OCI-LY7 (cell line): ENCODE measurements at regions of chr20 and their contacts with region 1.

Region 1: GRCh38 chr20:50746138-50746940 is 15.0 kb downstream of the PARD6B start:
- DNase-seq: no peak
- H3K4me3 ChIP-seq: no peak overlapping the region
- H3K27ac ChIP-seq: no peak overlapping the region
- H3K4me1 ChIP-seq: no peaks in the 10 kb centered on the region
- CTCF ChIP-seq: no peak

Region 2: GRCh38 chr20:50625986-50626677 is 120.2 kb before region 1 on chr20:
- CTCF ChIA-PET with region 1: interaction called, 6 read pairs
- POLR2A ChIA-PET with region 1: no interaction called
- intact Hi-C with region 1: loop called (anchors 5 kb)
- DNase-seq: peak; percentile 61
- H3K4me3 ChIP-seq: no peak overlapping the region
- H3K27ac ChIP-seq: no peak overlapping the region
- H3K4me1 ChIP-seq: peaks cover 36% of the 10 kb centered on the region
- CTCF ChIP-seq: peak; percentile 76

Region 3: DNA sequence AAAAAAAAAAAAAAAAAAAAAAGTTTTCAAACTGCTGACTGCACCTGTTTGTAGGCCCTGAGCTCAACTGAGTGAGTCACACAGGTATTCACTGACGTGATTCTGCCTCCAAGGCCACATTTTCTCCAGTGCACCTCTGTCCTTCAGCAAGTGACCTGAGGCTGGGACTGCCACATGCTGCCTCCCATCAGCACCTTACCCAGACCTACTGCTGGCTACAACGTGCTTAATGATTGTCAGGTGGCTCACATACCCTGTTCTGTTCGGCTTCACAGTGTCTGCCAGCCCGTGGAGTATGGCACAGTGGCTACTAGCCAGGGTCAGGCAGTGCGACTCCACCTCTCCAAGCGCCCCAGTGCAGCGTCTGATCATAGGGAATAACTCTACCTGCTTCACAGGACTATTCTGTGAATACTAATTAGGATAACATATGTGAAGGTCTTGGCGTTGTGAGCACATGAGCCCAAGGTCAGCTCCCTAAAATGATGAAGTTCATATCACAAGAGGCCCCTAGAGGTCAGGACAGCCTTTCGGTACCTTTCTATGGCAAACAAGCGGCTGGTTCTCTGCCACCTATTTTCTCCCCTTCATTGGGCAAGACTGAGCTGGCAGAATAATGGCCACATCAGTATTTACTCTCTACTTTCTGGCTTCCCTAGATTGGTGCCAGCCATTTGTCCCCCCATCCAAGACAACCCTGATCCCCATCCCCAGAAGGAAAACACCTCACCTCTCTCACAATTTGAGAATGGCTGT is 83.1 kb before region 1 on chr20:
- CTCF ChIA-PET with region 1: no interaction called
- POLR2A ChIA-PET with region 1: interaction called, 4 read pairs
- intact Hi-C with region 1: loop called (anchors 2 kb)
- DNase-seq: peak; percentile 52
- H3K4me3 ChIP-seq: no peak overlapping the region
- H3K27ac ChIP-seq: no peak overlapping the region
- H3K4me1 ChIP-seq: peaks cover 16% of the 10 kb centered on the region
- CTCF ChIP-seq: peak; percentile 67